ENCODE measurements at regions of chr1 and their contacts with region 1.

Region 1: DNA sequence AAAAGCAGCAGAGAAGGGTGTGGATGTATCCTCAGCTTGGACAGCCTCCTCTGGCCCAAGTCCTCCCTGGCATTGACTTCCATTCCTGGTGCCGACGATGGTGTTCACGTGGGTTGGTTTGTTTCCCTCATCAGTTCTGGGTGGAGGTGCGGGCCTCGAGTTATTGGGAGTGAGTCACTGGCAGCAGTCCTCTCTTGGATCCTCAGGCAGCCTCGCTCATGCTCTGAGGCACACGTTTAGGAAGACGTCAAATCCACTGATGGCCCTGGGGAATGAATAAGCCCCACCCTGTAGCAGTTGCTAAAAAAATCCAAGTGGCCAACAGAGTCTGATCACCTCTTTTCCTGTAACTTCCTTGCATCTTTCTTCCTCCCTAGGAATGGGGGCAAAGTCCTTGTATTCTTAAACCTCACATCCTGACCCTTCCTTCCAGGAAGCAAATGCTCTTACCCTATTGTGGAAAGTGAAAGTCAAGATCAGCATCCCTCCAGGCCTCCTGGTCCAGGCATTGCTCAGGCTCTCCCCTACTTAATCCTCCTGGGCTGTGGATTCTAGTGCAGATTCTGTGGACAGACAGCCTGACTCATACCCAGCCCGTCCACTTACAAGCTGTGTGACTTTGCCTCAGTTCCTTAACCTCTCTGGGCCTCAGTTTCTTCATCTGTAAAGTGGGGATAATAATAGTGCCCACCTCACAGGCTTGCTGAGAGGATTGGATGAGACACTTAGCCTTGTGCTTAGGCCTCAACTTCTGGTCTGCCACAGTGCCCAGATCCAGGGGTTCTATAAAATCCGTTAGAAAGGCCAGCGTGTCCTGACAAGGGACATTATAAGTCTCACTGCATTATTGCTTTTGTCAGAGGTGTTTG is 111.1 kb downstream of the TLR5 start:
- DNase-seq: peak in 4 of 5 donors; percentile 57 to 76 (median 68)
- ATAC-seq: peak; percentile 89 to 95 (median 94)
- H3K4me3 ChIP-seq: no peak overlapping the region
- H3K27ac ChIP-seq: peak overlapping the region in 11 of 12 donors; percentile 3 to 63 (median 49)
- H3K4me1 ChIP-seq: peaks cover 0 to 18% (median 6%) of the 10 kb centered on the region in 12 donors
- H3K27me3 ChIP-seq: no peaks in the 10 kb centered on the region
- CTCF ChIP-seq: no peak
- POLR2A ChIP-seq: no peak

Region 2: DNA sequence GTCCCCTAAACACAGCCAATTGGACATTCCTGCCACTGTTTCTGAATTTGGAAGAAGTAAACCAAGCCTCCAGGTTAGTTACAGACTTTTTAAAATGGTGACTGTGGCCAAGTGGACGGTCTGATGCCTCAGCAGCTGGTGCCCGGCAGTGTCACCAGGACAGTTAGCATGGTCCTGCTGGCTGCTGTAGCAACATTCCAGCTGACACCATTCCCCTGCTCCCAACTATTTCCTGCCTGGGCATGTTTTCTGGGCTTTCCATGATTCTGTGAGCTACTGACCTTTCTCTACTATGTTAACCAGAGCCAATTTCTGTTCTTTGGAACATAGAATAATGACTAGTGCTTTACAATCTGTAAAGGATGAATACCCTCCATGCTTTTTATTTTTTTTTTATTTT is 16.1 kb after region 1 on chr1:
- intact Hi-C with region 1: no loop called
- DNase-seq: no peak
- ATAC-seq: no peak
- H3K4me3 ChIP-seq: no peak overlapping the region
- H3K27ac ChIP-seq: no peak overlapping the region
- H3K4me1 ChIP-seq: no peaks in the 10 kb centered on the region
- H3K27me3 ChIP-seq: no peaks in the 10 kb centered on the region
- CTCF ChIP-seq: no peak
- POLR2A ChIP-seq: no peak

Region 3: GRCh38 chr1:223068900-223069665 is 37.1 kb after region 1 on chr1:
- intact Hi-C with region 1: loop called in 1 of 10 experiments (anchors 5 kb)
- DNase-seq: no peak
- ATAC-seq: no peak
- H3K4me3 ChIP-seq: no peak overlapping the region
- H3K27ac ChIP-seq: no peak overlapping the region
- H3K4me1 ChIP-seq: peaks cover 0 to 13% (median 3%) of the 10 kb centered on the region in 12 donors
- H3K27me3 ChIP-seq: no peaks in the 10 kb centered on the region
- CTCF ChIP-seq: no peak
- POLR2A ChIP-seq: no peak

Region 4: GRCh38 chr1:223102797-223103533 is 71.0 kb after region 1 on chr1:
- intact Hi-C with region 1: no loop called
- DNase-seq: peak in 4 of 5 donors; percentile 36 to 74 (median 64)
- ATAC-seq: peak; percentile 83 to 94 (median 88)
- H3K4me3 ChIP-seq: no peak overlapping the region
- H3K27ac ChIP-seq: peak overlapping the region in 4 of 12 donors; percentile 9 to 30 (median 22)
- H3K4me1 ChIP-seq: peaks cover 0 to 26% (median 10%) of the 10 kb centered on the region in 12 donors
- H3K27me3 ChIP-seq: no peaks in the 10 kb centered on the region
- CTCF ChIP-seq: no peak
- POLR2A ChIP-seq: peak in 1 of 2 donors; percentile 28

Measured in heart left ventricle (tissue), 16 donors.